CD4-positive, alpha-beta memory T cell (primary cell): ENCODE measurements at regions of chr1 and their contacts with region 1.

Region 1: GRCh38 chr1:6602669-6603237 is at the start of gene KLHL21:
- DNase-seq: peak; percentile 75 to 85 (median 82)
- H3K4me3 ChIP-seq: peak within 1 kb of the TSS; percentile 87 to 92
- H3K4me3 Mint-ChIP-seq: peak within 1 kb of the TSS; percentile 93 to 99 (median 98)
- H3K27ac ChIP-seq: peak within 1 kb of the TSS; percentile 88
- H3K27ac Mint-ChIP-seq: peak within 1 kb of the TSS; percentile 95 to 99 (median 97)
- H3K4me1 ChIP-seq: peaks cover 40% of the 10 kb centered on the region
- H3K4me1 Mint-ChIP-seq: peaks cover 6 to 43% (median 30%) of the 10 kb centered on the region in 4 donors
- H3K27me3 ChIP-seq: no peaks in the 10 kb centered on the region
- H3K27me3 Mint-ChIP-seq: no peaks in the 10 kb centered on the region
- total RNA-seq, gene KLHL21: 80.6 to 85.2 TPM

Region 2: DNA sequence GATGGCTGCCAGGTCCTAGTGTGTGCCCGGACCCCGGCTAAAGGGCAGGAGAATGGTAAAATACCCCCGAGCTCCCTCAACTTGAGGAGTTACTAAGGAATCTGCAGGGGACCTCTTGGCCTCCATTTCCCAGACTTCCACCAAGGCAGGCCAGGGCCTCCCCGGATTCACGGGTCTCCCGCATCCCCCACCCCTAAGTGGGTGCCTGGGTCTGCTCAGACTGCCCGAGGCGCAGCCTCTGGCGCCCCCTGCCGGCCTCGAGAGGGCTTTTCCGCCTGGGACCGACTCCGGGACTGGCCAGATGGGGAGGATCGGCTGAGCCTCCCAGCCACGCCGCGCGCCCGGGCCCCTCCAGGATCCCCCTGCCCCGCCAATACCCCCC is 113.0 kb before region 1 on chr1:
- CTCF ChIA-PET with region 1: interaction called, 8 read pairs
- POLR2A ChIA-PET with region 1: interaction called, 21 read pairs
- intact Hi-C with region 1: no loop called
- DNase-seq: peak; percentile 73 to 80 (median 77)
- H3K4me3 ChIP-seq: peak overlapping the region; percentile 78 to 80
- H3K4me3 Mint-ChIP-seq: peak overlapping the region; percentile 69 to 87 (median 81)
- H3K27ac ChIP-seq: peak overlapping the region; percentile 57
- H3K27ac Mint-ChIP-seq: peak overlapping the region in 3 of 7 donors; percentile 47 to 72 (median 59)
- H3K4me1 ChIP-seq: peaks cover 28% of the 10 kb centered on the region
- H3K4me1 Mint-ChIP-seq: peaks cover 15 to 53% (median 31%) of the 10 kb centered on the region in 4 donors
- H3K27me3 ChIP-seq: peaks cover 10% of the 10 kb centered on the region
- H3K27me3 Mint-ChIP-seq: peaks cover 6 to 9% of the 10 kb centered on the region in 2 donors

Region 3: DNA sequence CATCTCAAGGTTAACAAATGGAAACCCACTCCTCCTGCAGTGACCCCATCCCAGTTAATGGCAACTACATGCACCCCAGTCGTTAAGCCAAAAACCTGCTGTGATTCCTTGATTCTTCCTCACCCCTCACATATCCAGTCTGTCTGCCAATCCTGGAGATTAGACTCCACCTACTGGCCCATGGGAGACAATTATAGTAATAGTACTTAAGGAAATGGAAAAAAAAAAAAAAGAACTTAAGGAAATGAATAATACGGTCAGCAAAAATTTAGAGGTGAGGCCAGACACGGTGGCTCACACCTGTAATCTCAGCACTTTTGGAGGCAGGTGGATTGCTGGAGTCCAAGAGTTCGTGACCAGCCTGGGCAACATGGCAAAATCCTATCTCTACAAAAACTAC is 55.5 kb before region 1 on chr1:
- CTCF ChIA-PET with region 1: interaction called, 5 read pairs
- POLR2A ChIA-PET with region 1: interaction called, 84 read pairs
- intact Hi-C with region 1: no loop called
- DNase-seq: no peak
- H3K4me3 ChIP-seq: no peak overlapping the region
- H3K4me3 Mint-ChIP-seq: peak overlapping the region in 6 of 8 donors; percentile 43 to 82 (median 64)
- H3K27ac ChIP-seq: peak overlapping the region; percentile 49
- H3K27ac Mint-ChIP-seq: peak overlapping the region; percentile 78 to 97 (median 87)
- H3K4me1 ChIP-seq: peaks cover 33% of the 10 kb centered on the region
- H3K4me1 Mint-ChIP-seq: peaks cover 28 to 40% (median 31%) of the 10 kb centered on the region in 4 donors
- H3K27me3 ChIP-seq: no peaks in the 10 kb centered on the region
- H3K27me3 Mint-ChIP-seq: no peaks in the 10 kb centered on the region

Region 4: DNA sequence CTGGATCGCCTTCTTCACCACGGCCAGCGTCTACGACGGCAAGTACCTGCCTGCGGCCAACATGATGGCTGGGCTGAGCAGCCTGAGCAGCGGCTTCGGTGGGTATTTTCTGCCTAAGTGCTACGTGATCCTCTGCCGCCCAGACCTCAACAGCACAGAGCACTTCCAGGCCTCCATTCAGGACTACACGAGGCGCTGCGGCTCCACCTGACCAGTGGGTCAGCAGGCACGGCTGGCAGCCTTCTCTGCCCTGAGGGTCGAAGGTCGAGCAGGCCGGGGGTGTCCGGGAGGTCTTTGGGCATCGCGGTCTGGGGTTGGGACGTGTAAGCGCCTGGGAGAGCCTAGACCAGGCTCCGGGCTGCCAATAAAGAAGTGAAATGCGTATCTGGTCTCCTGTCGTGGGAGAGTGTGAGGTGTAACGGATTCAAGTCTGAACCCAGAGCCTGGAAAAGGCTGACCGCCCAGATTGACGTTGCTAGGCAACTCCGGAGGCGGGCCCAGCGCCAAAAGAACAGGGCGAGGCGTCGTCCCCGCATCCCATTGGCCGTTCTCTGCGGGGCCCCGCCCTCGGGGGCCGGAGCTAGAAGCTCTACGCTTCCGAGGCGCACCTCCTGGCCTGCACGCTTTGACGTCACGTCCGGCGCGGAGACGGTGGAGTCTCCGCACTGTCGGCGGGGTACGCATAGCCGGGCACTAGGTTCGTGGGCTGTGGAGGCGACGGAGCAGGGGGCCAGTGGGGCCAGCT is 23.2 kb before region 1 on chr1 and contains the start of gene ZBTB48:
- CTCF ChIA-PET with region 1: interaction called, 13 read pairs
- POLR2A ChIA-PET with region 1: interaction called, 273 read pairs
- intact Hi-C with region 1: loop called (anchors 1 kb)
- DNase-seq: peak; percentile 95 to 97 (median 95)
- H3K4me3 ChIP-seq: peak within 1 kb of the TSS; percentile 69 to 76
- H3K4me3 Mint-ChIP-seq: peak within 1 kb of the TSS; percentile 92 to 99 (median 96)
- H3K27ac ChIP-seq: peak within 1 kb of the TSS; percentile 83
- H3K27ac Mint-ChIP-seq: peak within 1 kb of the TSS; percentile 96 to 99 (median 99)
- H3K4me1 ChIP-seq: peaks cover 32% of the 10 kb centered on the region
- H3K4me1 Mint-ChIP-seq: peaks cover 19 to 42% (median 30%) of the 10 kb centered on the region in 4 donors
- H3K27me3 ChIP-seq: no peaks in the 10 kb centered on the region
- H3K27me3 Mint-ChIP-seq: no peaks in the 10 kb centered on the region
- total RNA-seq, gene ZBTB48: 62.6 to 70.7 TPM

Region 5: GRCh38 chr1:6591222-6591621 is 11.5 kb before region 1 on chr1:
- CTCF ChIA-PET with region 1: interaction called, 4 read pairs
- POLR2A ChIA-PET with region 1: interaction called, 273 read pairs
- intact Hi-C with region 1: no loop called
- DNase-seq: no peak
- H3K4me3 ChIP-seq: no peak overlapping the region
- H3K4me3 Mint-ChIP-seq: peak overlapping the region in 2 of 8 donors; percentile 13 to 31
- H3K27ac ChIP-seq: no peak overlapping the region
- H3K27ac Mint-ChIP-seq: peak overlapping the region in 5 of 7 donors; percentile 31 to 72 (median 36)
- H3K4me1 ChIP-seq: peaks cover 26% of the 10 kb centered on the region
- H3K4me1 Mint-ChIP-seq: peaks cover 7 to 45% (median 23%) of the 10 kb centered on the region in 4 donors
- H3K27me3 ChIP-seq: no peaks in the 10 kb centered on the region
- H3K27me3 Mint-ChIP-seq: no peaks in the 10 kb centered on the region

Region 6: DNA sequence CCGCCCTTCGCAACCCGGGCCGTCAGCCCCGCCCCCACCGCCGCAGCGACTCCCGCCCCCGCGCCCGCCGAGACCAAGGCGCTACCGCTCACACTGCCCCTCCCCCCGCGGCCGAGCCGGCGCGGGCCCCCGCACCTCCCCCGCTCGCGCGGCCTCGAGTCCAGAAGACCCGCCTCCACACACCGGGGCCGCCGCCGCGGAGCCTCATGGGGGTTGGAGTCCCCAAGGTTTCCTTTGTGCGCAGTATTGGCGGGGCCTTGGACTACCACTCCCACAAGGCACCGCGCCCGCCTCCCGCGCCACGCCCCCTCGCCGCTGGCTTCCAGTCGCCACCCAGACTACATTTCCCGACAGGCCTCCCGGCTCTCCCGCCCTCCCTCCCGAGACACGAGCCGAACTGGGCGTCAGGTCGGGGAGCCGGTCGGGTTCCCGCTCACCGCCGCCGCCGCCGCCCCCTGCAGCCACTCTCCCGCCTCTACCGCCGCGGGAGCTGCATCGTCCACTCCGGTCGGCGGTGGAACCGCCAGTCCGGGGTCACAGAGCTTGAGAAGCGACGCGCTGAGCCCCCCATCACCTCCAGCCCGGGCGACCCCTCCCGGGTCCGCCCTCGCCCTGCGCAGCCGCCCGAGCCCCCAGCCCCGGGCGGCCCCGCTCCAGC is 10.7 kb after region 1 on chr1 and contains the start of gene PHF13:
- CTCF ChIA-PET with region 1: interaction called, 7 read pairs
- POLR2A ChIA-PET with region 1: interaction called, 133 read pairs
- intact Hi-C with region 1: loop called (anchors 1 kb)
- DNase-seq: peak; percentile 98 to 99 (median 99)
- H3K4me3 ChIP-seq: peak within 1 kb of the TSS; percentile 20 to 46
- H3K4me3 Mint-ChIP-seq: peak within 1 kb of the TSS; percentile 91 to 97 (median 93)
- H3K27ac ChIP-seq: peak within 1 kb of the TSS; percentile 65
- H3K27ac Mint-ChIP-seq: peak within 1 kb of the TSS; percentile 86 to 94 (median 92)
- H3K4me1 ChIP-seq: peaks cover 23% of the 10 kb centered on the region
- H3K4me1 Mint-ChIP-seq: peaks cover 15 to 31% (median 25%) of the 10 kb centered on the region in 4 donors
- H3K27me3 ChIP-seq: no peaks in the 10 kb centered on the region
- H3K27me3 Mint-ChIP-seq: no peaks in the 10 kb centered on the region
- total RNA-seq, gene PHF13: 13.1 to 14.7 TPM

Region 7: DNA sequence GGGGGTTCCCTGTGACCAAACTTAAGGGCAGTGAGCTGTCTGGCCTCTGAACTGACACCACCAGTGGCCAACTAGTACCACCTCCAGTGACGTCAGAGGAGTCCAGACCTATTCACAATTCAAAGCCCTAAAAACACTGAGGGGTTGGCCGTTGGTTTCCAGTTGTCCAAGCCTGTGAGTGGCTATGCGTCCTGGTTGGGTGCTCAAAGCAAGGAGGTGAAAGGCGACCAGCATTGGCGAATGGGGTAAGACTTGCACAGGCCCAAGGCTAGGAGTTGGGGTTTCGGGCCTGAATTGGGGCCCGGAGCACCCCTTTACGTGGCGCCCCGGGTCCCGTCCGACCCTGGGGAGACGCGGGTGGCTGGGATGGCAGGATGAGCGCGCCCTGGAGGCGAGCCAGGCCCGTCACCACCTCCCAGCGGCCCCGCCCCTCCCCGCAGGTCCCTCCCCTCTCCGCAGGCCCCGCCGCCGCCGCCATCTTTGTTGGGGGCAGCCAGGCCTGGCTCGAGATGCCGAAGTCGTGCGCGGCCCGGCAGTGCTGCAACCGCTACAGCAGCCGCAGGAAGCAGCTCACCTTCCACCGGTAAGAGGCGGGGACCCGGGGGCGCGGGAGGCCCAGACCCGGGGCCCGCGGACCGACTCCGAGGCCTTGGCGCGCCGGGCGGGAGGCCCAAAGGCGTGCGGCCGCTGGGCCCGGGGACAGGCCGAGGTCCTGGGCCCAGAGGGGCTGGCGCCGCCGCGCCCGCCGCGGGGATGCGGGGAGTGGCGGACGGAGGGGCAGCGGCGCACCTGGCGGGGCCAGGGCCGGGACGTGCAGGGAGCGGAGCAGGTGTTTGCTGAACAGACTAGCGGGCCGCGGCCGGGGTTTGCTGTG is 22.2 kb after region 1 on chr1 and contains the start of gene THAP3:
- CTCF ChIA-PET with region 1: interaction called, 13 read pairs
- POLR2A ChIA-PET with region 1: interaction called, 117 read pairs
- intact Hi-C with region 1: loop called (anchors 1 kb)
- DNase-seq: peak; percentile 84 to 91 (median 86)
- H3K4me3 ChIP-seq: peak within 1 kb of the TSS; percentile 63 to 73
- H3K4me3 Mint-ChIP-seq: peak within 1 kb of the TSS; percentile 90 to 95 (median 94)
- H3K27ac ChIP-seq: peak within 1 kb of the TSS; percentile 60
- H3K27ac Mint-ChIP-seq: peak within 1 kb of the TSS; percentile 78 to 93 (median 90)
- H3K4me1 ChIP-seq: peaks cover 23% of the 10 kb centered on the region
- H3K4me1 Mint-ChIP-seq: peaks cover 15 to 35% (median 28%) of the 10 kb centered on the region in 4 donors
- H3K27me3 ChIP-seq: no peaks in the 10 kb centered on the region
- H3K27me3 Mint-ChIP-seq: no peaks in the 10 kb centered on the region
- total RNA-seq, gene THAP3: 29.5 to 34.5 TPM